Mammary epithelial cell (primary cell): ENCODE measurements at regions of chr15 and their contacts with region 1.

Region 1: DNA sequence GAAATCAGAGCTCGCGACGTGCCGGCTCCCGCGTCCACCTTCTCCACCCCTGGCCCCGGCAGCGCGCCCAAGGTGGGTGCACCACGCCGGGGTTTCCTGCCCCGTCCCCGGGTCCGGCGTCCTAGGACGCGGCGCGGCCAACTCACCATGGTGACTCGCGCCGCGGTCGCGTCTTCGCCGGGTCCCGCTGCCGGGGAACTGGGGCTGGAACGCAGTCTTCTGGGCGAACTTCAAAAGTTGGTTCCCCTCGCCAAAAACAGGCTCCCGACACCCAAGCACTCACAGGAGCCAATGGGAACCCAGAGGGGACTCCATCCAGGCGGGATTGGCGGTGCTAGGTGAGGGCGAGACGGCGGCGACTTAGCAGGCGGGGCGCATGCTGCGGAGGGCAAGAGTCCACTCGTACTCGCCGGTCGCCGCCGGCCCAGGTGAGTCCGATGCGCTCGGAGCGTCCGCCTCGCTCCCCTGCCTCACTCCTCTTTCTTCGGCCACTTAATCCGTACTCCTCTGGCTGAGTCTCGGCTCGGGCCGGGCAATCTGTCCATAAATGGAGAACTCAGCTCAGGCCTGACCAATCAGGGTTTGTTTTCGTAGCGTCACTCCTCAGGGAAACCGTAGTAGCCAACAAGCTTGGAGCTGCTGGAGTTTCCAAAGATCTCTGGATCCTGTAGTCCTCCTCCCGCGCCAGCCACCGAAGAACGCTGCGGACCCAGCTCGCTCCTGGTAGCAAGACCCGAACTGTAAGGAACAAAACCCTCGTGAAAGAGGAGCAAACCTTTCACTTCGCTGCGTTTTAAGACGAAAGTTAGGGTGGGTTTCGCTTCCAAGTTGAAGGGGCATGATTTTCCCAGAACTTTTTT is at the start of gene MYO1E:
- DNase-seq: peak; percentile 98
- H3K4me3 ChIP-seq: peak within 1 kb of the TSS; percentile 77 to 98 (median 90)
- H3K27ac ChIP-seq: peak within 1 kb of the TSS; percentile 95
- H3K4me1 ChIP-seq: peaks cover 27% of the 10 kb centered on the region
- H3K27me3 ChIP-seq: no peaks in the 10 kb centered on the region
- CTCF ChIP-seq: no peak
- total RNA-seq, gene MYO1E: 205 to 298 TPM

Region 2: GRCh38 chr15:59169251-59169708 is 203.3 kb before region 1 on chr15:
- CTCF ChIA-PET with region 1: no interaction called
- dilution Hi-C with region 1: no loop called
- in situ Hi-C with region 1: no loop called
- intact Hi-C with region 1: loop called (anchors 5 kb)
- DNase-seq: peak; percentile 71
- H3K4me3 ChIP-seq: no peak overlapping the region
- H3K27ac ChIP-seq: peak overlapping the region; percentile 97
- H3K4me1 ChIP-seq: peaks cover 69% of the 10 kb centered on the region
- H3K27me3 ChIP-seq: no peaks in the 10 kb centered on the region
- CTCF ChIP-seq: no peak

Region 3: GRCh38 chr15:59268168-59268979 is 104.2 kb before region 1 on chr15:
- CTCF ChIA-PET with region 1: no interaction called
- dilution Hi-C with region 1: no loop called
- in situ Hi-C with region 1: no loop called
- intact Hi-C with region 1: loop called (anchors 2 kb)
- DNase-seq: peak; percentile 79
- H3K4me3 ChIP-seq: no peak overlapping the region
- H3K27ac ChIP-seq: peak overlapping the region; percentile 75
- H3K4me1 ChIP-seq: peaks cover 34% of the 10 kb centered on the region
- H3K27me3 ChIP-seq: no peaks in the 10 kb centered on the region
- CTCF ChIP-seq: no peak

Region 4: GRCh38 chr15:59299929-59300617 is 72.5 kb before region 1 on chr15:
- CTCF ChIA-PET with region 1: interaction called, 10 read pairs
- dilution Hi-C with region 1: no loop called
- in situ Hi-C with region 1: no loop called
- intact Hi-C with region 1: loop called (anchors 1 kb)
- DNase-seq: peak; percentile 97
- H3K4me3 ChIP-seq: no peak overlapping the region
- H3K27ac ChIP-seq: peak overlapping the region; percentile 97
- H3K4me1 ChIP-seq: peaks cover 74% of the 10 kb centered on the region
- H3K27me3 ChIP-seq: no peaks in the 10 kb centered on the region
- CTCF ChIP-seq: no peak

Region 5: DNA sequence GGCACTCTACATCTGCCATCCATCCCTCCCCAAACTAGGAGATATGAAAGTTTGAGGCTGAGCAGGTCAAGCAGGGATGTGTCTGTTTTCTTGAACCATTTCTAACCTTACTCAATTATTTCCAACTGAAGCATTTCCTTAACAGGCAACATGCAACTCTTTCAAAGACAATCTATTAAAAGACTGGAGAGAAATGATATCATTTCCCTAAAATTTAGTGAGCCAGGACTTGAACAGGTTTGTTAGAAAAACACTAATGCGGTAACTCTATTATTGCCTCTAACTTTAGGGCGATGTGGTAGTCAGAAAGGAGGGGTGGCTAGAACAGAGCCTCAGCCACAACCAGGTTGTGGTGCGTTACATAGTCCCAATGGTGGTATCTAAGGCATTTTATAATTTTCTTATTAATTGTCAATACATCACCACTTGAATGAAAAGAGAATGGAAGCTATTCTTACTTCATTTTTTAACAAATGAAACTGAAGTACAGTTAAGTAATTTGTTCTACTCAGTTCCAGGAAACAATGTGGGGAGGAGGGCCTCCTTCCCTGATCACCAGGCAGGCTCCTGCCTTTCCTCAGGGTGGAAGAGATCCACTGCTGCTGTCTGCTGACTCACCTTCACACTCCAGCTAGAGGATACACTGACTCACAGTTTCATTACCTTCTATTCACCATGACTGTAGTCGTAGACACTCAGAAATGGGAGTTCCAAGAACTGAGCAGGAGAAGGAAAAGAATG is 22.7 kb before region 1 on chr15:
- CTCF ChIA-PET with region 1: no interaction called
- dilution Hi-C with region 1: no loop called
- in situ Hi-C with region 1: no loop called
- intact Hi-C with region 1: loop called (anchors 1 kb)
- DNase-seq: peak; percentile 97
- H3K4me3 ChIP-seq: no peak overlapping the region
- H3K27ac ChIP-seq: peak overlapping the region; percentile 99
- H3K4me1 ChIP-seq: peaks cover 59% of the 10 kb centered on the region
- H3K27me3 ChIP-seq: no peaks in the 10 kb centered on the region
- CTCF ChIP-seq: no peak

Region 6: GRCh38 chr15:59522988-59523461 is 150.4 kb after region 1 on chr15:
- CTCF ChIA-PET with region 1: no interaction called
- dilution Hi-C with region 1: no loop called
- in situ Hi-C with region 1: no loop called
- intact Hi-C with region 1: no loop called
- DNase-seq: no peak
- H3K4me3 ChIP-seq: no peak overlapping the region
- H3K27ac ChIP-seq: no peak overlapping the region
- H3K4me1 ChIP-seq: no peaks in the 10 kb centered on the region
- H3K27me3 ChIP-seq: no peaks in the 10 kb centered on the region
- CTCF ChIP-seq: no peak